ENCODE measurements at regions of chr14 and their contacts with region 1.

Region 1: DNA sequence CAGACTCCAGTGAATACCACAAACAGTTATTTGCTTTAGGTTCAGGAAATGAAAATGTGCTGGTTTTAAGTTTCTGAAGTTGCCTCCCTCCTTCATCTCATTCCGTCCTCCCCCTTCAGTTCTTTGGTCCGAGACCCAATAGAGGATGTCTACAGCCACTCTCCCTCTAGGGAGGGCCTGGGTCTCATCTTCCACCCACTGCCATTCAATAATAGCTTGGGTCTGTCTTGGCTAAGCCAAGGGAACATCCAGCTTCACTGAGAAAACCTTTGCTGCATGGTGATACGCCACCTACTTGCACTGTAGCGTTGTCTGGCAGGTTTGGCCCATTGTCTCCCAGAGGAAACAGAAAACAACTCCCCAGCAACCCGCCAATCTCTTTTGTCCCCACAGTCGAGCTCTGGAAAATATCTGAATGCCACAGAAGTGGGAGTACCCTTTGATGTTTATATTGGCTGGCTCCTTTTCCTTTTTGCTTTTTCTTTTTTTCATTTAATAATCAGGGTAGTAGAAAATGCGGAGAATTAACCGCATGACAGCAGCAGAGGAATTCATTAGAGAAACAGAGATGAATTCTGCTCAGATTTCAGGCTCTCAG is 380.1 kb downstream of the RAD51B start:
- DNase-seq: peak; percentile 84
- H3K4me3 ChIP-seq: no peak overlapping the region
- H3K27ac ChIP-seq: peak overlapping the region; percentile 67 to 87 (median 84)
- H3K4me1 ChIP-seq: peaks cover 3 to 62% (median 28%) of the 10 kb centered on the region in 4 donors
- H3K27me3 ChIP-seq: no peaks in the 10 kb centered on the region
- CTCF ChIP-seq: no peak
- EP300 ChIP-seq: peak in 1 of 4 donors; percentile 12
- POLR2A ChIP-seq: no peak

Region 2: GRCh38 chr14:68232300-68233055 is 32.8 kb after region 1 on chr14:
- intact Hi-C with region 1: loop called (anchors 2 kb)
- DNase-seq: peak; percentile 85
- H3K4me3 ChIP-seq: no peak overlapping the region
- H3K27ac ChIP-seq: peak overlapping the region; percentile 79 to 88 (median 82)
- H3K4me1 ChIP-seq: peaks cover 0 to 52% (median 49%) of the 10 kb centered on the region in 4 donors
- H3K27me3 ChIP-seq: no peaks in the 10 kb centered on the region
- CTCF ChIP-seq: no peak
- EP300 ChIP-seq: peak in 1 of 4 donors; percentile 52
- POLR2A ChIP-seq: no peak